Naive thymus-derived CD4-positive, alpha-beta T cell (primary cell): ENCODE measurements at regions of chr6 and their contacts with region 1.

Region 1: DNA sequence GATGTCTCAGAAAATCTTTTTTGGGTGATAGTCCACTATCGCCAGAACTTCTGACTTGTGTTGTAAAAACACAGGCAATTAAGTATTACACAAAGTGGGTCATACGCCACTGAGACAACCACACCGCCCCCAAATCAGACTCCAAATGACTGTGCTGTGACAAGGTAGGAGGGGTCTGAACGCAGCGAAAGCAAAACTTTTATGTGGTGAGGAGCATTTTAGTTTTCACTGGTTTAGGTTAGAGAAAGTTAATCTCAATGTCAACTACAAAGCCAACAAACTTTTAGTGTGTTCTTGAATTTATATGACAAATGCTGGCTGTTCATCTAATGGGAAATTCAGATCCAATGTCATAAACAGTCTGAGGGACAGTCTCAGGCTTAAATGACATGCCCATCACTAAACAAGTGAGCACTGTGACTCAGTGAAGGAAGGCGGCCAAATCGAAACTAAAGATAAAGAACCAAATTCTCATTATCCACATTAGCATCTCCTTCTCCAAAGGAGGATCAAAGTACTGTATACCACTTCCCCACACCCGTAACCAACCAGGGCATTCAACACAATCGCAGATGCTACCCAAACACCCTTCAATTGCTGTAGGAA is 186.7 kb downstream of the GJA10 start:
- DNase-seq: peak; percentile 24 to 87 (median 82)
- ATAC-seq: peak; percentile 86
- H3K4me3 ChIP-seq: peak overlapping the region; percentile 57
- H3K4me3 Mint-ChIP-seq: peak overlapping the region; percentile 84 to 99 (median 89)
- H3K27ac ChIP-seq: peak overlapping the region; percentile 84
- H3K27ac Mint-ChIP-seq: peak overlapping the region; percentile 90 to 99 (median 97)
- H3K4me1 ChIP-seq: peaks cover 54 to 71% of the 10 kb centered on the region in 2 donors
- H3K4me1 Mint-ChIP-seq: peaks cover 48 to 100% (median 92%) of the 10 kb centered on the region in 7 donors
- H3K27me3 ChIP-seq: no peaks in the 10 kb centered on the region
- H3K27me3 Mint-ChIP-seq: peaks cover 0 to 11% (median 0%) of the 10 kb centered on the region in 5 donors

Region 2: GRCh38 chr6:89290401-89291155 is 790.4 kb before region 1 on chr6:
- CTCF ChIA-PET with region 1: no interaction called
- POLR2A ChIA-PET with region 1: no interaction called
- intact Hi-C with region 1: no loop called
- DNase-seq: no peak
- ATAC-seq: no peak
- H3K4me3 ChIP-seq: no peak overlapping the region
- H3K4me3 Mint-ChIP-seq: no peak overlapping the region
- H3K27ac ChIP-seq: no peak overlapping the region
- H3K27ac Mint-ChIP-seq: peak overlapping the region in 1 of 9 donors; percentile 1
- H3K4me1 ChIP-seq: no peaks in the 10 kb centered on the region
- H3K4me1 Mint-ChIP-seq: peaks cover 0 to 4% (median 0%) of the 10 kb centered on the region in 7 donors
- H3K27me3 ChIP-seq: no peaks in the 10 kb centered on the region
- H3K27me3 Mint-ChIP-seq: no peaks in the 10 kb centered on the region

Region 3: DNA sequence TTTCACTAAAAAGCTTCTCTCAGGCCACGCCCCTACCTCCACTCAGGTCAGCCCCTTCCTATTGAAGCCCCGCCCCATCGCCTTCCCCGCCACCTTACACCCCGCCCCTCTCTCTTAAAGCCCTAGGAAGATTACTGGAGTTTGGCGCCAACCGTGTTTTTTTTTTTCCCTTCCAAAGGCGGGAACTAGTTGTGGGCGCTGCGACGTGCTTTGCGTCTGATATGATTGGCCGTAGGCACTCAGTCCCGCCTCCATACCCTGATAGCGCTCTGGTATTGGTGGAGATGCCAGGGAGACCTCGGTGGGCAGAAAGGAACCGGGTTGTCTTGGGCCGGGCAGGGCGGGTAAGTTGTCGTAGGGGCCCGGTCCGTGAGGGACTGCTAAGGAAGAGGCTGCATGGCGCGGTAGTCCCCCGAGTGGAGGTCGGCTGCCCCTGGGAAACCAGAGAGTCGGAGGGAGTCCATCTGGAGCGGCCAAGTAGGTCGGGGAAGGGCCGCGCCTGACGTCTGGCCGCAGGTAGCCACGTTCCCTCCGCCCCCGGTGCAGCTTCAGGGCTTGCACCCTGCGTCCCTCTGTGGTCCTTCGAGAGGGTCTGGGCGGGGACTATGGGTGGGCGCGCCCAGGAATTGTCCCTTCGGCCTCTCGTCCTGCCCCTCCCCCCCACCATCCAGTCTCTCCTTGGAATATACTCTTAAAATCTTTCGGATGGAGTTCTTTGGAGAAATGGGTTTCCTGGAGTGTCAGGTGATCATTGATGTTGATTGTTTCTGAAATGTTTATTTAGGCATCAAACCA is 251.2 kb before region 1 on chr6 and contains the start of gene CASP8AP2:
- CTCF ChIA-PET with region 1: no interaction called
- POLR2A ChIA-PET with region 1: no interaction called
- intact Hi-C with region 1: loop called (anchors 1 to 10 kb)
- DNase-seq: peak; percentile 71 to 98 (median 96)
- ATAC-seq: peak; percentile 97
- H3K4me3 ChIP-seq: peak within 1 kb of the TSS; percentile 96
- H3K4me3 Mint-ChIP-seq: peak within 1 kb of the TSS; percentile 92 to 100 (median 99)
- H3K27ac ChIP-seq: peak within 1 kb of the TSS; percentile 83
- H3K27ac Mint-ChIP-seq: peak within 1 kb of the TSS; percentile 84 to 97 (median 95)
- H3K4me1 ChIP-seq: peaks cover 11 to 14% of the 10 kb centered on the region in 2 donors
- H3K4me1 Mint-ChIP-seq: peaks cover 11 to 47% (median 33%) of the 10 kb centered on the region in 7 donors
- H3K27me3 ChIP-seq: no peaks in the 10 kb centered on the region
- H3K27me3 Mint-ChIP-seq: no peaks in the 10 kb centered on the region
- total RNA-seq, gene CASP8AP2: 21.2 to 44.8 (median 34.5) TPM

Region 4: DNA sequence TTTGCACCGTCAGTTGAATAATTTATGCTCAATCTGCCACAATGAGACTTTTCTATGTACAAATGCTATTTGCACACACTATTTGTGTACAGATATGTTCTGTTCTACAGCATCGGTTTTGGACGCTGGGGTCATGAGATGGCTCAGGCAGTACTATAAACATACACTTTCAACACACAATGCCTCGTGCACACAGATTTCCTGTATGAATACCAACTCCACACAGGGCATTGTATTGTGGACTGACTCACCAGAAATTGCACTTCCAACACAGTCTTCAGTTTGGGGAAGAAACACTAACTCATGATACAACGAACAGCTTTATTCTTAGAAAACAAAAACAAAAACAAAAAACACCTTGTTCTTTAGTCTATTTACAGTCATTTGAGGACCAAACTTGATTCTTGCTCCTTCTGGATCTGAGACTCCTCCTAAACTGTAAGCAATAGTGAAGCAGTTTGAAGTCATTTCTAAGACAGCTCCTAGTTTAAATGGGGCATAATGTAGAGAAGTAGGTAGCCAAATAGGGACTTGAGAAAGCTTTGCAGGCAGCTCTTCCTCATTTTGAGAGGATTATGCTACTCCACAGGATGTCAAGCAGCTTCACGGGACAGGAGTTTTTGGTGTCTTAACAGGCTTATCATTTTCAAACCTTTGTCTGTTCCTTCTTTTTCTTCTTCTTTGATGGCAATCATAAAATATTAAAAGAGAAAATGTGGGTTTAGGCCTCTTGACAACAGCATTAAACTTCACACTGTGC is 153.0 kb before region 1 on chr6:
- CTCF ChIA-PET with region 1: no interaction called
- POLR2A ChIA-PET with region 1: no interaction called
- intact Hi-C with region 1: no loop called
- DNase-seq: no peak
- ATAC-seq: peak; percentile 70
- H3K4me3 ChIP-seq: no peak overlapping the region
- H3K4me3 Mint-ChIP-seq: peak overlapping the region in 1 of 10 donors; percentile 32
- H3K27ac ChIP-seq: peak overlapping the region; percentile 7
- H3K27ac Mint-ChIP-seq: peak overlapping the region in 8 of 9 donors; percentile 13 to 78 (median 66)
- H3K4me1 ChIP-seq: peaks cover 0 to 14% of the 10 kb centered on the region in 2 donors
- H3K4me1 Mint-ChIP-seq: peaks cover 28 to 69% (median 61%) of the 10 kb centered on the region in 7 donors
- H3K27me3 ChIP-seq: no peaks in the 10 kb centered on the region
- H3K27me3 Mint-ChIP-seq: no peaks in the 10 kb centered on the region

Region 5: GRCh38 chr6:90025523-90026061 is 55.4 kb before region 1 on chr6:
- CTCF ChIA-PET with region 1: no interaction called
- POLR2A ChIA-PET with region 1: interaction called, 3 read pairs
- intact Hi-C with region 1: loop called in 1 of 2 experiments (anchors 10 kb)
- DNase-seq: peak in 1 of 9 donors; percentile 48
- ATAC-seq: no peak
- H3K4me3 ChIP-seq: no peak overlapping the region
- H3K4me3 Mint-ChIP-seq: peak overlapping the region in 3 of 10 donors; percentile 18 to 30 (median 24)
- H3K27ac ChIP-seq: no peak overlapping the region
- H3K27ac Mint-ChIP-seq: peak overlapping the region in 8 of 9 donors; percentile 1 to 81 (median 50)
- H3K4me1 ChIP-seq: peaks cover 6 to 38% of the 10 kb centered on the region in 2 donors
- H3K4me1 Mint-ChIP-seq: peaks cover 38 to 99% (median 90%) of the 10 kb centered on the region in 7 donors
- H3K27me3 ChIP-seq: no peaks in the 10 kb centered on the region
- H3K27me3 Mint-ChIP-seq: no peaks in the 10 kb centered on the region

Region 6: GRCh38 chr6:90110971-90111370 is 30.0 kb after region 1 on chr6:
- CTCF ChIA-PET with region 1: interaction called, 7 read pairs
- POLR2A ChIA-PET with region 1: interaction called, 11 read pairs
- intact Hi-C with region 1: loop called (anchors 1 kb)
- DNase-seq: peak in 8 of 9 donors; percentile 51 to 78 (median 64)
- ATAC-seq: peak; percentile 84
- H3K4me3 ChIP-seq: no peak overlapping the region
- H3K4me3 Mint-ChIP-seq: peak overlapping the region; percentile 35 to 81 (median 58)
- H3K27ac ChIP-seq: peak overlapping the region; percentile 56
- H3K27ac Mint-ChIP-seq: peak overlapping the region; percentile 73 to 92 (median 82)
- H3K4me1 ChIP-seq: peaks cover 26 to 57% of the 10 kb centered on the region in 2 donors
- H3K4me1 Mint-ChIP-seq: peaks cover 36 to 97% (median 90%) of the 10 kb centered on the region in 7 donors
- H3K27me3 ChIP-seq: no peaks in the 10 kb centered on the region
- H3K27me3 Mint-ChIP-seq: no peaks in the 10 kb centered on the region

Region 7: GRCh38 chr6:90230548-90231215 is 149.7 kb after region 1 on chr6:
- CTCF ChIA-PET with region 1: no interaction called
- POLR2A ChIA-PET with region 1: no interaction called
- intact Hi-C with region 1: loop called in 1 of 2 experiments (anchors 1 kb)
- DNase-seq: no peak
- ATAC-seq: no peak
- H3K4me3 ChIP-seq: no peak overlapping the region
- H3K4me3 Mint-ChIP-seq: peak overlapping the region; percentile 40 to 82 (median 56)
- H3K27ac ChIP-seq: peak overlapping the region; percentile 88
- H3K27ac Mint-ChIP-seq: peak overlapping the region; percentile 42 to 99 (median 95)
- H3K4me1 ChIP-seq: peaks cover 24 to 97% of the 10 kb centered on the region in 2 donors
- H3K4me1 Mint-ChIP-seq: peaks cover 54 to 100% (median 98%) of the 10 kb centered on the region in 7 donors
- H3K27me3 ChIP-seq: no peaks in the 10 kb centered on the region
- H3K27me3 Mint-ChIP-seq: peaks cover 0 to 2% (median 0%) of the 10 kb centered on the region in 5 donors

Region 8: GRCh38 chr6:90393232-90393884 is 312.4 kb after region 1 on chr6:
- CTCF ChIA-PET with region 1: interaction called, 5 read pairs
- POLR2A ChIA-PET with region 1: no interaction called
- intact Hi-C with region 1: loop called (anchors 1 kb)
- DNase-seq: peak; percentile 43 to 87 (median 81)
- ATAC-seq: peak; percentile 81
- H3K4me3 ChIP-seq: no peak overlapping the region
- H3K4me3 Mint-ChIP-seq: peak overlapping the region in 9 of 10 donors; percentile 2 to 59 (median 26)
- H3K27ac ChIP-seq: no peak overlapping the region
- H3K27ac Mint-ChIP-seq: peak overlapping the region; percentile 7 to 77 (median 26)
- H3K4me1 ChIP-seq: peaks cover 18 to 29% of the 10 kb centered on the region in 2 donors
- H3K4me1 Mint-ChIP-seq: peaks cover 15 to 43% (median 38%) of the 10 kb centered on the region in 7 donors
- H3K27me3 ChIP-seq: no peaks in the 10 kb centered on the region
- H3K27me3 Mint-ChIP-seq: peaks cover 0 to 4% (median 0%) of the 10 kb centered on the region in 5 donors